Endothelial cell of umbilical vein (primary cell): ENCODE measurements at regions of chrX and their contacts with region 1.

Region 1: GRCh38 chrX:152904151-152905080 is 6.5 kb downstream of the ZNF185 start:
- DNase-seq: peak; percentile 40
- H3K4me3 ChIP-seq: no peak overlapping the region
- H3K27ac ChIP-seq: peak overlapping the region; percentile 3
- H3K4me1 ChIP-seq: peaks cover 4% of the 10 kb centered on the region
- H3K27me3 ChIP-seq: no peaks in the 10 kb centered on the region
- CTCF ChIP-seq: peak; percentile 54 to 76
- POLR2A ChIP-seq: no peak

Region 2: GRCh38 chrX:152830312-152831305 is 73.8 kb before region 1 on chrX and contains the starts of genes CETN2 and NSDHL:
- CTCF ChIA-PET with region 1: no interaction called
- POLR2A ChIA-PET with region 1: no interaction called
- dilution Hi-C with region 1: no loop called
- intact Hi-C with region 1: no loop called
- DNase-seq: peak; percentile 97
- H3K4me3 ChIP-seq: peak within 1 kb of the TSS; percentile 79 to 87 (median 84)
- H3K27ac ChIP-seq: peak within 1 kb of the TSS; percentile 53
- H3K4me1 ChIP-seq: peaks cover 18% of the 10 kb centered on the region
- H3K27me3 ChIP-seq: no peaks in the 10 kb centered on the region
- CTCF ChIP-seq: no peak
- POLR2A ChIP-seq: peak; percentile 56
- total RNA-seq, gene CETN2: 28.2 and 28.6 TPM in 2 replicates
- total RNA-seq, gene NSDHL: 40.0 and 43.4 TPM in 2 replicates

Region 3: DNA sequence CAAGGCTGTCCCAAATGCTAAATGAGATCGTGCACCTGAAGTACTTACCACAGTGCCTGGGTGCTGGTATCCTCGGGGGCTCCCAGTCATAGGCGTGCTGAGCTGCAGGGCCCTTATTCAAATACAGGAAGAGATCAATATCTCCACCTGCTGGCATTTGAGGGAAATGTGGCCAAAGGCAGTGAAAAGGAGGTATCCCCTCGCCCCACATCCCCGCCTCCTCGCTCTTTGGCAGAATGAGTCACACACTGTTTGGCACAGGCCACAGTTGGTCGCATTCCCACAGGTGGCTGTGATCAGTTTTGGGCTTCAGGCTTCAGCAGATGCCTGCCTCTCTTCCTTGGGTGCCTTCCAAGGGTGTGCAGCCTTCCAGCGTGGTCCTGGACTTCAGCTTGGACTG is 21.9 kb after region 1 on chrX:
- CTCF ChIA-PET with region 1: interaction called, 12 read pairs
- POLR2A ChIA-PET with region 1: no interaction called
- dilution Hi-C with region 1: no loop called
- intact Hi-C with region 1: loop called (anchors 1 kb)
- DNase-seq: peak; percentile 72
- H3K4me3 ChIP-seq: no peak overlapping the region
- H3K27ac ChIP-seq: no peak overlapping the region
- H3K4me1 ChIP-seq: peaks cover 2% of the 10 kb centered on the region
- H3K27me3 ChIP-seq: no peaks in the 10 kb centered on the region
- CTCF ChIP-seq: peak; percentile 38 to 39
- POLR2A ChIP-seq: no peak